Activated CD8-positive, alpha-beta T cell treated with anti-CD3 and anti-CD28 coated beads for 36 hours (primary cell): ENCODE measurements at regions of chr2 and their contacts with region 1.

Region 1: GRCh38 chr2:112726497-112727190 is 5.8 kb downstream of the NT5DC4 start:
- DNase-seq: peak; percentile 92
- ATAC-seq: peak; percentile 96
- H3K4me3 Mint-ChIP-seq: no peak overlapping the region
- H3K27ac Mint-ChIP-seq: no peak overlapping the region
- H3K4me1 Mint-ChIP-seq: peaks cover 3% of the 10 kb centered on the region
- H3K27me3 Mint-ChIP-seq: no peaks in the 10 kb centered on the region
- CTCF ChIP-seq: peak; percentile 97

Region 2: DNA sequence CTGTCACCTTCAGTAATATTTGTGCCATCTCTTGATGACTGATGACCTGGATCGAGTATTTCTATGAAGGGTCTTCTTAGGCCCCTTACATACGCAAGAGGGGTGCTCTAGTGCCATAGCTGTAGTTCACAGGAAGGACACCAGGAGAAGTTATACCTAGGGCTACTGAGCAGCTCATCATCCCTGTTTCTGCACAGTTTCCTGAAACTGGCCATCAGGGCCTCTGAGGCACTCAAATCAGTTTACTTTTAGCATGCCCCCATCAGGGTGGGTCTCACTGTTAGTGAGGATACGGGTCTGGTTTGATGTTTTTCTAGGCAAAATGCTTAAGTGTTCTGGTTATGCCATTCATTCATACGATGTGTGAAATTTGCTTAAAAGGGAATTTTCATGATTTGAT is 608.5 kb before region 1 on chr2:
- CTCF ChIA-PET with region 1: no interaction called
- POLR2A ChIA-PET with region 1: no interaction called
- intact Hi-C with region 1: no loop called
- DNase-seq: no peak
- ATAC-seq: no peak
- H3K4me3 Mint-ChIP-seq: no peak overlapping the region
- H3K27ac Mint-ChIP-seq: no peak overlapping the region
- H3K4me1 Mint-ChIP-seq: peaks cover 2% of the 10 kb centered on the region
- H3K27me3 Mint-ChIP-seq: no peaks in the 10 kb centered on the region
- CTCF ChIP-seq: no peak

Region 3: GRCh38 chr2:112198780-112199179 is 527.9 kb before region 1 on chr2:
- CTCF ChIA-PET with region 1: no interaction called
- POLR2A ChIA-PET with region 1: no interaction called
- intact Hi-C with region 1: no loop called
- DNase-seq: no peak
- ATAC-seq: no peak
- H3K4me3 Mint-ChIP-seq: no peak overlapping the region
- H3K27ac Mint-ChIP-seq: no peak overlapping the region
- H3K4me1 Mint-ChIP-seq: peaks cover 16% of the 10 kb centered on the region
- H3K27me3 Mint-ChIP-seq: no peaks in the 10 kb centered on the region
- CTCF ChIP-seq: no peak

Region 4: DNA sequence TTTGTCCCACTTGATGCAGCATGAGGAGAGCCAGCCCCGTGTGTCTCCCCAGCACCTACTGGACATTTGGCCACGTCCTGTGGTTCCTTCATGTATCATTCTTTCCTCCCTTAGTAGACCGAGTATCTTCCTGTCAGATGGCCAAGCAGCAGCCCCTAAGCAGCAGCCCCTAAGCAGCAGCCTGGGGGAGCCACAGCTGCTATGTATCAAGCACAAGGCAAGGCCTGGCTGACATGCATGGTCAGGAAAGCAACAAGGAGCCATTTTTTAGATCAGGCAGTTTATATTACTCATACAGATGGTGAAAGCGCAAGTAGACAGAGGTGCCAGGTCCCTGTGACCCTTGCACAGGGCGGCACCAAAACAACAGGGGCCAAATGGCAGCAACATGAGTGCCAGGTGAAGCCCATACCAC is 120.1 kb before region 1 on chr2:
- CTCF ChIA-PET with region 1: interaction called, 202 read pairs
- POLR2A ChIA-PET with region 1: no interaction called
- intact Hi-C with region 1: no loop called
- DNase-seq: no peak
- ATAC-seq: no peak
- H3K4me3 Mint-ChIP-seq: no peak overlapping the region
- H3K27ac Mint-ChIP-seq: no peak overlapping the region
- H3K4me1 Mint-ChIP-seq: no peaks in the 10 kb centered on the region
- H3K27me3 Mint-ChIP-seq: no peaks in the 10 kb centered on the region
- CTCF ChIP-seq: no peak

Region 5: GRCh38 chr2:112645310-112646101 is 81.1 kb before region 1 on chr2 and contains the start of gene SLC20A1:
- CTCF ChIA-PET with region 1: interaction called, 15 read pairs
- POLR2A ChIA-PET with region 1: interaction called, 5 read pairs
- intact Hi-C with region 1: no loop called
- DNase-seq: peak; percentile 95
- ATAC-seq: peak; percentile 93
- H3K4me3 Mint-ChIP-seq: peak within 1 kb of the TSS; percentile 95
- H3K27ac Mint-ChIP-seq: peak within 1 kb of the TSS; percentile 88
- H3K4me1 Mint-ChIP-seq: peaks cover 55% of the 10 kb centered on the region
- H3K27me3 Mint-ChIP-seq: no peaks in the 10 kb centered on the region
- CTCF ChIP-seq: no peak
- total RNA-seq, gene SLC20A1: 52.7 to 52.8 TPM

Region 6: GRCh38 chr2:112685271-112685884 is 41.3 kb before region 1 on chr2:
- CTCF ChIA-PET with region 1: interaction called, 37 read pairs
- POLR2A ChIA-PET with region 1: no interaction called
- intact Hi-C with region 1: no loop called
- DNase-seq: no peak
- ATAC-seq: no peak
- H3K4me3 Mint-ChIP-seq: no peak overlapping the region
- H3K27ac Mint-ChIP-seq: no peak overlapping the region
- H3K4me1 Mint-ChIP-seq: peaks cover 4% of the 10 kb centered on the region
- H3K27me3 Mint-ChIP-seq: no peaks in the 10 kb centered on the region
- CTCF ChIP-seq: no peak

Region 7: GRCh38 chr2:112701052-112701451 is 25.6 kb before region 1 on chr2:
- CTCF ChIA-PET with region 1: interaction called, 35 read pairs
- POLR2A ChIA-PET with region 1: no interaction called
- intact Hi-C with region 1: no loop called
- DNase-seq: no peak
- ATAC-seq: no peak
- H3K4me3 Mint-ChIP-seq: no peak overlapping the region
- H3K27ac Mint-ChIP-seq: no peak overlapping the region
- H3K4me1 Mint-ChIP-seq: peaks cover 12% of the 10 kb centered on the region
- H3K27me3 Mint-ChIP-seq: peaks cover 18% of the 10 kb centered on the region
- CTCF ChIP-seq: no peak

Region 8: GRCh38 chr2:112737542-112738232 is 11.0 kb after region 1 on chr2:
- CTCF ChIA-PET with region 1: interaction called, 31 read pairs
- POLR2A ChIA-PET with region 1: interaction called, 4 read pairs
- intact Hi-C with region 1: no loop called
- DNase-seq: no peak
- ATAC-seq: no peak
- H3K4me3 Mint-ChIP-seq: no peak overlapping the region
- H3K27ac Mint-ChIP-seq: no peak overlapping the region
- H3K4me1 Mint-ChIP-seq: no peaks in the 10 kb centered on the region
- H3K27me3 Mint-ChIP-seq: no peaks in the 10 kb centered on the region
- CTCF ChIP-seq: no peak

Region 9: DNA sequence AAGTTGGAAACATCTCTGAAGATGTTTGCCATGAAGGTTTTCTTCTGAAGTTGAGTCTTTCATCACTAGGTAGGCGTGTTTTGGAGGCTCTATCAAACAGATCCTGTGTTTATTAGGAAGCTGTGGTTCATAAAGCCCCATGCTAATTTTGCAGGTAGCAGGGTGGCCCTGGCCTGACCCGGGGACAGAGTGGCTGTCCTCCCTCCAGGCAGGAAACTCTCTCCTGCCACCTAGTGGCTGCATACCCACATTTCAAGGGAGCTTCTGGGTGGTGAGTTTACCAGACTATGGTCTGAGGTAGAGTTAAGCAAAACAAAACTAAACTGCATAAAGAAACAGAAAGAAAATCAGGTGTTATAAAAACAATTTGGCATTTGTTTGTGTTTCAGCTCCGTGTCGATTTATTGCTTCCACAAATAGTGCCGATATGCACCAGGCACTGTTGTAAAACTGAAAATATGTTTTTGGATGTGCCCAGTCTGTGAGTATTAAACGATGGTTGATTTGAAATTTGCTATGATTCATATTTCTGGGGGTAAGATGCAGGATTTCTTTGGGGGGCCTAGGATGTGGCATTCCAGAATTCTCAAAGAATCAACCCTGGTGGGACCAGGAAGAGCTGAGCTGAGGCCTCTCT is 158.3 kb after region 1 on chr2:
- CTCF ChIA-PET with region 1: interaction called, 15 read pairs
- POLR2A ChIA-PET with region 1: interaction called, 3 read pairs
- intact Hi-C with region 1: no loop called
- DNase-seq: peak; percentile 81
- ATAC-seq: peak; percentile 79
- H3K4me3 Mint-ChIP-seq: no peak overlapping the region
- H3K27ac Mint-ChIP-seq: no peak overlapping the region
- H3K4me1 Mint-ChIP-seq: peaks cover 23% of the 10 kb centered on the region
- H3K27me3 Mint-ChIP-seq: no peaks in the 10 kb centered on the region
- CTCF ChIP-seq: peak; percentile 95

Region 10: GRCh38 chr2:113050921-113051895 is 324.6 kb after region 1 on chr2:
- CTCF ChIA-PET with region 1: no interaction called
- POLR2A ChIA-PET with region 1: no interaction called
- intact Hi-C with region 1: no loop called
- DNase-seq: no peak
- ATAC-seq: no peak
- H3K4me3 Mint-ChIP-seq: no peak overlapping the region
- H3K27ac Mint-ChIP-seq: no peak overlapping the region
- H3K4me1 Mint-ChIP-seq: peaks cover 8% of the 10 kb centered on the region
- H3K27me3 Mint-ChIP-seq: peaks cover 2% of the 10 kb centered on the region
- CTCF ChIP-seq: peak; percentile 38